ENCODE measurements at regions of chr5 and their contacts with region 1.

Region 1: GRCh38 chr5:43389679-43390329 is 22.4 kb downstream of the CCL28 start:
- DNase-seq: peak; percentile 84
- ATAC-seq: peak; percentile 94
- H3K4me3 ChIP-seq: no peak overlapping the region
- H3K27ac ChIP-seq: no peak overlapping the region
- H3K4me1 ChIP-seq: peaks cover 0 to 10% of the 10 kb centered on the region in 2 experiments; a peak in 2 of 4 replicates
- H3K27me3 ChIP-seq: no peaks in the 10 kb centered on the region
- CTCF ChIP-seq: peak; percentile 90 to 98 (median 92)
- POLR2A ChIP-seq: no peak
- RAD21 ChIP-seq: peak; percentile 93

Region 2: DNA sequence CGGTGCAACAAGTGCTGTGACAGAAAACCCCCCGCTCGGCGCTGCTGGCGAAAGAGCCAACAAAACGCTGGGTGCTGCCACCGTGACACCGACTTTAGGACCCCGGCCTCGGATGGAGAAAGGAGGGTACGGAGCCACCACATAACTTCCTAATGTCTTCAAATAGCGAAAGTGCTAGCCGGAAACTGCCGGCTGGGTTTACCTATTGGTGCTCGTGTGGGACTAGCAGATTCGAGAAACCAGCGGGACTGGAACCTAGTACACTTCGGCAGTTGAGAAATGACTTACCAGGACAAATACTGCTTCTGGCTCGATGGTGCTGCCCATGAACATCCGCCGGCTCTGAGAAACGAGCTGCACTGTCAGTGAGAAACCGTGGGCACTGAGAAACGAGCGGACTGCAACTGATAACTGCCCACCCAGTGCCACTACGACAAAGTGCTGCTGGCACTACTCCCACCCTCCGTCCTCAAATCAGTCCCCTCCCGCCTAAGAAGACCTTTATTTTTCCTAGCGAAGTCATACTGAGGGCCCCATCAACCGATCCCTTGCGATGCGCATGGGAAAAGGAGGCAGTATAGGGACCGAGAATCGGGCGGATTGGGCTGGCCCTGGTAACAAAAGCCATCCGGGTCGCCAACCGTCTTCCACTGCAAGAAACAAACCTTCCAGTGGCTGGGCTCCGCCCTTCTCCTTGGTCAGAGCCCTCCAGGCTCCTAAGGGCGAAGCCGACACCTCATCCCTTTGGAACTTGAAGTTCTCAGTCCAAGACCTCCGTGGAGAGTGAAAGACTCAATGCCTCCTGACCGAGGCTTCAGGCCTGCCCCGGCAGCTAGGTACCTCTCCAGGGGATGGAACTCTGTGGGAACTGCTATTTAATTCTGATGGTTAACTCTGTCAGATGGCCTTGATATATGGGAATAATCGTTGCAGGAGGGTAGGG is 322.7 kb before region 1 on chr5:
- CTCF ChIA-PET with region 1: no interaction called
- POLR2A ChIA-PET with region 1: no interaction called
- RAD21 ChIA-PET with region 1: no interaction called
- intact Hi-C with region 1: loop called (anchors 5 kb)
- DNase-seq: peak; percentile 85
- ATAC-seq: peak; percentile 63
- H3K4me3 ChIP-seq: peak overlapping the region; percentile 76 to 77
- H3K27ac ChIP-seq: peak overlapping the region; percentile 93
- H3K4me1 ChIP-seq: peaks cover 12 to 24% of the 10 kb centered on the region in 2 experiments
- H3K27me3 ChIP-seq: no peaks in the 10 kb centered on the region
- CTCF ChIP-seq: no peak
- POLR2A ChIP-seq: peak; percentile 32
- RAD21 ChIP-seq: no peak

Region 3: GRCh38 chr5:43105369-43106289 is 284.2 kb before region 1 on chr5:
- CTCF ChIA-PET with region 1: no interaction called
- POLR2A ChIA-PET with region 1: no interaction called
- RAD21 ChIA-PET with region 1: no interaction called
- intact Hi-C with region 1: loop called (anchors 1 kb)
- DNase-seq: peak; percentile 92
- ATAC-seq: peak; percentile 95
- H3K4me3 ChIP-seq: peak overlapping the region; percentile 8 to 29; a peak in 3 of 4 replicates
- H3K27ac ChIP-seq: no peak overlapping the region
- H3K4me1 ChIP-seq: peaks cover 0 to 10% of the 10 kb centered on the region in 2 experiments; a peak in 1 of 4 replicates
- H3K27me3 ChIP-seq: no peaks in the 10 kb centered on the region
- CTCF ChIP-seq: peak; percentile 99 to 100 (median 100)
- POLR2A ChIP-seq: no peak
- RAD21 ChIP-seq: peak; percentile 75

Region 4: GRCh38 chr5:43227655-43228054 is 162.1 kb before region 1 on chr5:
- CTCF ChIA-PET with region 1: interaction called, 20 read pairs
- POLR2A ChIA-PET with region 1: no interaction called
- RAD21 ChIA-PET with region 1: interaction called, 3 to 5 read pairs
- intact Hi-C with region 1: loop called (anchors 1 kb)
- DNase-seq: peak; percentile 47
- ATAC-seq: peak; percentile 72
- H3K4me3 ChIP-seq: no peak overlapping the region
- H3K27ac ChIP-seq: no peak overlapping the region
- H3K4me1 ChIP-seq: no peaks in the 10 kb centered on the region
- H3K27me3 ChIP-seq: no peaks in the 10 kb centered on the region
- CTCF ChIP-seq: peak; percentile 42 to 87 (median 59); a peak in 5 of 6 replicates
- POLR2A ChIP-seq: no peak
- RAD21 ChIP-seq: peak; percentile 75

Region 5: DNA sequence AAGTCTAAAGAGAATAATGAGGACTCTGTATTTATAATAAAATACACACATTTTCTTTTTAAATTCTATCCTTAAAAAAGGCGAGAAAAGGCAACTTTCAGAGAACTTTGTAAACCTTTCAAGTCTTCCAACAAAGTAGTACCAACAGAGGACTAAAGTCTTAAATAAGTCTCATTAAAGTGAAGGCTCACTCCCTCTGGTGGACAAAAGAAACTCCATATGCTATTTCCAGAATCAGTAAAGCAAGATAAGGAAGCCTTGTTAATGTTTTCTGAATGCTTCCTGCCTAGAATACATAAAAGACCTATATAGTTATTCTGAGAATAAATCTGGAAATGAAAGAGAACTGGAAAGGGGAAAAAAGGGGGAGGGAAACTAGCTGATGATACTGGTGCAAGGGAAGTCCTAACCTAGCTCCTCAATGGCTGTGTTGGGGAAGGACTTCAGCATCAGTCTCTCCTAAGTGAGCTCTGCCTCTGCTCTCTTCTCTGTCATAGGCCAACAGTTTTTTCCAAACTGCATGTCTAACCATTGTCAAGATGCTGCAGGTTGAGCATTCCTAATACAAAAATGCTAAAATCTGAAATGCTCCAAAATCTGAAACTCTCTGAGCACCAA is 83.7 kb before region 1 on chr5:
- CTCF ChIA-PET with region 1: interaction called, 3 read pairs
- POLR2A ChIA-PET with region 1: no interaction called
- RAD21 ChIA-PET with region 1: no interaction called
- intact Hi-C with region 1: loop called (anchors 1 kb)
- DNase-seq: peak; percentile 41
- ATAC-seq: peak; percentile 81
- H3K4me3 ChIP-seq: no peak overlapping the region
- H3K27ac ChIP-seq: no peak overlapping the region
- H3K4me1 ChIP-seq: no peaks in the 10 kb centered on the region
- H3K27me3 ChIP-seq: no peaks in the 10 kb centered on the region
- CTCF ChIP-seq: peak; percentile 57 to 79 (median 70); a peak in 5 of 6 replicates
- POLR2A ChIP-seq: no peak
- RAD21 ChIP-seq: peak; percentile 51

Region 6: DNA sequence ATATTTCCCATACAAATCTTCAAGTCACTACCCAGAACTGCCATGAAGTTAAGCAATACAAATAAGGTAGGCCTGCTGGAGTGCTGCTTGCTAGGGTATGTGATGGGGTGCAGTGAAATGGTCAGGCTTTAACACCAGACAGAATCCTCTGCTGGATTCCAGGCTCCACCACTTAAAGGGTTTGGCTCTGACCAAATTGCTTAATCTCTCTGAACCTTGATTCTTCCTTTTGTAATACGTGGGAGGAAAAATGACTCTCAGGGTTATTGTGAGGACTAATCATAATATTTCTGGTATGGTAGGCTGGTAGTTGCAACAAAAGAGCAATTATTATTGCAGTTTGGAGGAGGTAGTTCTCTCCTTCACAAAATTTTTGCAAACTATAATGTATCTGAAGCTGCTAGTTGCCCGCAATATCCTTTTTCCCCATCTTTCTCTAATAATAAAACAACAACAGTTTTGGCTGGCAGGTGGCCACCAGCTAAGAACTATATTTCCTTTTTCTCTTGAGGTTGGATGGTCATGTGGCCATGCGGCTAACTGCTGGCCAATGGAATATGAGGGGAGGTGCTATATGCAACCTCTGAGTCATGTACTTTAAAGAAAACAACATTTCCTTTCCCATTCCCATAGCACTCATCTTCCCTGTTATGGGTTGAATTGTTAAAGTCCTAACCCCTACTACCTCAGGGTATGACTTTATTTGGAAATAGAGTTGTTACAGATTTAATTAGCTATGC is 21.7 kb before region 1 on chr5:
- CTCF ChIA-PET with region 1: no interaction called
- POLR2A ChIA-PET with region 1: no interaction called
- RAD21 ChIA-PET with region 1: no interaction called
- intact Hi-C with region 1: no loop called
- DNase-seq: no peak
- ATAC-seq: no peak
- H3K4me3 ChIP-seq: no peak overlapping the region
- H3K27ac ChIP-seq: no peak overlapping the region
- H3K4me1 ChIP-seq: no peaks in the 10 kb centered on the region
- H3K27me3 ChIP-seq: no peaks in the 10 kb centered on the region
- CTCF ChIP-seq: no peak
- POLR2A ChIP-seq: no peak
- RAD21 ChIP-seq: no peak

Region 7: DNA sequence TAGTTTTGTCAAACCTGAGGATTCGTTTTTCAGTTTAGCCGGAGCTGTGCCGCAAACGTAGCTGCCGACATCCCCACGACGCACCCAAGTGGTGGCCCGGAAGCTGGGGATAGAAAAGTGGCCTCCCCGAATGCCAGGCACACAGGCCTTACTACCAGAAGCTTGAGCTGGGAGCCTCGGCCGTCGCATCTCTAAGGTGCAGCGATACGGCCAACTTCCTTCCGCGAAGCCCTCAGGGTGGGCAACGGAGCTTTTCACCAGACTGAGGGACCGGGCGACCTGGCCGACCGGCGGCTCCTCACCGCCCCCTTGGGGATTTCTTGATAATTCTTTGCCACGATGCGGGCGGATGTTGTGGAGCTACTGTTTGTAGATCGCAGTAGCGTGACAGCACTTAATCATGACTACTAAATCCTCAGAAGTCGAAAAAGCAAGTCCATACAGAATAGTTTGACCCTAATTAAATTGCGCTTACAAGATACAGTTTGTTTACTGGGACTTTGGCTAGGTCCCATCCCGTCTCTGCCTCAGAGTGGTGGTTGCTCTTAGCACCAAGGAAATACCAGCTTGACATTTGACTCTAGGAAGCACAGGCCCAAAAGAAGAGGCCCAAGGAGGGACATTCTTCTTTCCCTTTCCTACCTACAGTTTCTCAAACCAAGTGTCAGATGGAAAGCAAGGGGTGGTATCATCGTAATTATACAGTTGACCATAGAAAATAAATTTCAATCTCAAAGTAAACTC is 94.5 kb after region 1 on chr5:
- CTCF ChIA-PET with region 1: interaction called, 16 read pairs
- POLR2A ChIA-PET with region 1: interaction called, 5 read pairs
- RAD21 ChIA-PET with region 1: no interaction called
- intact Hi-C with region 1: loop called (anchors 5 kb)
- DNase-seq: peak; percentile 51
- ATAC-seq: peak; percentile 79
- H3K4me3 ChIP-seq: peak overlapping the region; percentile 74 to 90
- H3K27ac ChIP-seq: peak overlapping the region; percentile 73
- H3K4me1 ChIP-seq: peaks cover 2 to 16% of the 10 kb centered on the region in 2 experiments; a peak in 2 of 4 replicates
- H3K27me3 ChIP-seq: no peaks in the 10 kb centered on the region
- CTCF ChIP-seq: peak; percentile 44 to 75 (median 74)
- POLR2A ChIP-seq: no peak
- RAD21 ChIP-seq: peak; percentile 57